Motor neuron (in vitro differentiated cells): ENCODE measurements at regions of chr10 and their contacts with region 1.

Region 1: DNA sequence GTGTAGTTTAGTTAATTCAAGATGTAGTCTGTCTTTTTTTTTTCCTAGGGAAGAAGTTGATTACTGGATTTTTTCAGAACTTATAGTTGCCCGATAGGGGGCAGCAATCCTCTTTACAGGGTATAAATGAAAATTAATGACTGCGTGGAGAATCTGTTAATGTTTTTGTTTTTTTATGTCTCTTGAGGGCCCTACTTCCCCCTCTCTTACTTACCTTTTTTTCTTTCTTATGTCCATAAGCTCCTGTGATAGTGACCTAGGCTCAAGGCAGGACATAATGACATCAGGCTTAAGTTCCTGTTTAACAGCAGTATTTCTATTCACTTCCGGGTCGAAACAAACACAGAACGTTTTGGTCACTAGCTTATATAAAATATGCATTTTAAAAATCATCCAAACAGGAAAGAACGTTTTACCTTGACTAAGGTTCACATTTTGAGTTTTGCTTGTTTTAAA is 18.8 kb downstream of the CDC123 start:
- ATAC-seq: peak in 3 of 8 experiments; percentile 28 to 43 (median 40)
- H3K4me3 ChIP-seq: no peak overlapping the region
- H3K27ac ChIP-seq: no peak overlapping the region
- H3K4me1 ChIP-seq: no peaks in the 10 kb centered on the region

Region 2: GRCh38 chr10:11631890-11632587 is 582.8 kb before region 1 on chr10:
- in situ Hi-C with region 1: no loop called
- ATAC-seq: no peak
- H3K4me3 ChIP-seq: no peak overlapping the region
- H3K27ac ChIP-seq: no peak overlapping the region
- H3K4me1 ChIP-seq: no peaks in the 10 kb centered on the region

Region 3: GRCh38 chr10:12121673-12122072 is 93.1 kb before region 1 on chr10:
- in situ Hi-C with region 1: loop called in 1 of 9 experiments (anchors 25 kb)
- ATAC-seq: no peak
- H3K4me3 ChIP-seq: no peak overlapping the region
- H3K27ac ChIP-seq: no peak overlapping the region
- H3K4me1 ChIP-seq: no peaks in the 10 kb centered on the region